ENCODE measurements at regions of chr18 and their contacts with region 1.

Region 1: GRCh38 chr18:864872-865273 is 39.8 kb upstream of the ADCYAP1 start:
- DNase-seq: peak; percentile 82 to 90 (median 87)
- H3K4me3 ChIP-seq: no peak overlapping the region
- H3K27ac ChIP-seq: no peak overlapping the region
- H3K4me1 ChIP-seq: peaks cover 0 to 6% (median 2%) of the 10 kb centered on the region in 4 experiments
- H3K27me3 ChIP-seq: peaks cover 0 to 2% (median 2%) of the 10 kb centered on the region in 5 experiments

Region 2: GRCh38 chr18:805008-805754 is 59.7 kb before region 1 on chr18:
- CTCF ChIA-PET with region 1: no interaction called
- POLR2A ChIA-PET with region 1: no interaction called
- DNase-seq: peak in 2 of 3 donors; percentile 33 to 44
- H3K4me3 ChIP-seq: peak overlapping the region in 5 of 7 experiments; percentile 1 to 69 (median 36)
- H3K27ac ChIP-seq: peak overlapping the region in 1 of 2 experiments; percentile 76
- H3K4me1 ChIP-seq: peaks cover 7 to 49% (median 26%) of the 10 kb centered on the region in 4 experiments
- H3K27me3 ChIP-seq: no peaks in the 10 kb centered on the region

Region 3: DNA sequence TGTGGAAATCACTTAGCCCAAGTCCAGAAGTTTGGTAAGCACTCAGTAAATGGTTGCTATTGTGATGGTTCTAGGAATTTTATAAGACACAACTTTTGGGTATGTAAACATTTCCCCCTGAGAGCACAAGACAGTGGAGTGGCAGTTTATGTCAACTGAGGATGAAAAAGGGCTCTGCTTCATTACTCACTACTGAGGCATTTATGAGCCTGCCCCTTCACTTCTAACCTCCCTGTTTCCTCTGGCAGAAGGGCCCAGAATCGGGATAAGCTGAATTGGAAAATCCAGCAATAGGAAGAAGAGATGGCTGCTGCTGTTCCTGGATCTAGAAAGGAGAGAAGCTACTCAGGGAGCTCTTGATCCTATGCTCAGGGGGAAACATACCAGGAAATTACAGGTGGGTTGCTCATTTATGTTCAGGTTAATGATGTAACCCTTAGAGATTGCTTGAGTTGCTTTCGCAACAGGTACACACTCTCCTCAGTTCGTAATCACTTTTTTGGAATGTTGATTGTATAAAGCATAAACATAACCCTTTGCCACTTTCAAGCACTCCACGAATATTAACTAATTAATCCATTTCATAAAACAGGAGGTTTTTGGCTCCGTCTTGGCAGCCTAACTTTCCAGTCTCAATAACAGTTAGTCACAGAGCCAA is 86.1 kb after region 1 on chr18:
- CTCF ChIA-PET with region 1: no interaction called
- POLR2A ChIA-PET with region 1: no interaction called
- DNase-seq: no peak
- H3K4me3 ChIP-seq: no peak overlapping the region
- H3K27ac ChIP-seq: no peak overlapping the region
- H3K4me1 ChIP-seq: no peaks in the 10 kb centered on the region
- H3K27me3 ChIP-seq: peaks cover 0 to 3% (median 0%) of the 10 kb centered on the region in 5 experiments

Region 4: DNA sequence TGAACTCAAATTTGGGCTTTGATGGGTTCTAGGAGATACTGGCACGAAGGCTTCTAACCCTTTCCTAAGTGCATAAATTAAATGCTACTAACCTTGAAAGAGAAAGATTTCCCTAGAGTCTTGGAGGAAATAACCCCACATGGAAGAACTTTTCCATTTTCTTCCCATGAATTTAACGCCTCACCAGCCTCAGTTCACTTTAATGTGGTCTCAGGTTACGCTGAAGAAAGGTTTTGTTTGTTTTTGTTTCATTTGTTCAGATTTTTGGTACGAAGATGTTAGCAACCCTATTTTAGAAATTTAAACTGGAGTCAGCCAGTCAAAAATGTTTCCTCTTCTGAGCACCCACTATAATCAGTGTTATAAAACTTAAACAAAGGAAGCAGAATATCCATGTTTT is 1675.7 kb after region 1 on chr18:
- CTCF ChIA-PET with region 1: interaction called, 11 read pairs
- POLR2A ChIA-PET with region 1: no interaction called
- DNase-seq: no peak
- H3K4me3 ChIP-seq: no peak overlapping the region
- H3K27ac ChIP-seq: no peak overlapping the region
- H3K4me1 ChIP-seq: no peaks in the 10 kb centered on the region
- H3K27me3 ChIP-seq: no peaks in the 10 kb centered on the region